AG04450 (cell line): ENCODE measurements at regions of chr19 and their contacts with region 1.

Region 1: GRCh38 chr19:34220472-34221063 is 33.8 kb upstream of the GARRE1 start:
- DNase-seq: peak; percentile 24
- H3K4me3 ChIP-seq: no peak overlapping the region
- H3K27ac ChIP-seq: no peak overlapping the region
- H3K27me3 ChIP-seq: no peaks in the 10 kb centered on the region
- CTCF ChIP-seq: peak; percentile 73

Region 2: DNA sequence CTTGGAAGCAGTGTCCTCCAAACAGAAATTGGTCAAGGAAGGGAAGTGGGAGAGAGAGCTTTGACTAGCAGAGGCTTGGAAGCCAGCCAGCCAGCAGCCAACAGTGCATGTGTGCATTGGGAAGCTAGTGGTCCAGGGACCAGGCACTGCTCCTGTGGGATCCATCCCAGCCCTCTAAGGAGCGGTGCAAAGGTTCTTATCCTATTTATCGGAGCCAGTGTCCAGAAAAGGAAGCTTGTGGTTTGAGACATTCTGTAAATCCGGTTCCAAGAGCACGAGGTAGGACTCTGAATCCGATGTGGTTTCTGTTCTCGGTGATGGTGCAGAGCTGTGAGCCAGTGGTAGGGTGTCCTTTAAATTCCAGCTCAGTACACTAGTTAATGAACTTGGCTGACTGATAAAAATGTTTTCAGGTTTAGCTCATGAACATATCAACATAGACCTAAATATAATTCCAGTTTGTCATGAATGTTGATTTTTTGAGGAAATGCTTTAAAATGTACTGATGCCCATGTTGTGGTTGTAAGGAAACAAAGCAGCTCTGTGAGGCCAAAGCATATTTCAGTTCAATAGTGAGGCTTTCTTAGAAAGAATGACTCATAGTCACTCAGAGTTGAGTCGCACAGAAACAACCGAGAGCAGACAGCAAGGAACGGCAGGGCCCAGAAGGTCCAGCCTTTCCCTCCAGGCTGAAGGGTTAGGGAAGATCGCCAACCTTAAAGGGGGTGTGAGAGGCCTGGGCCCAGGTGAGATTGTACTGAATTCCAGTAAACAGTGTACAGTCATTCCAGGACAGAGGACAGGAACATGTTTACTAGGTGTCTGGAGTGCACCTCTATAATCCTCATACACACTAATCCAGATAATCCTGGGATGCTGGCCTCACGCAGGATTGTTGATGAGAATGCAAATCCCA is 12.3 kb after region 1 on chr19:
- CTCF ChIA-PET with region 1: interaction called, 19 read pairs
- POLR2A ChIA-PET with region 1: interaction called, 3 read pairs
- DNase-seq: peak; percentile 74
- H3K4me3 ChIP-seq: peak overlapping the region; percentile 45
- H3K27ac ChIP-seq: peak overlapping the region; percentile 85
- H3K27me3 ChIP-seq: no peaks in the 10 kb centered on the region
- CTCF ChIP-seq: no peak